Vagina (tissue), 2 donors: ENCODE measurements at regions of chr22 and their contacts with region 1.

Region 1: GRCh38 chr22:33519071-33519973 is 401.0 kb downstream of the LARGE1 start:
- DNase-seq: no peak
- H3K4me3 ChIP-seq: no peak overlapping the region
- H3K27ac ChIP-seq: peak overlapping the region; percentile 47
- H3K4me1 ChIP-seq: peaks cover 11% of the 10 kb centered on the region
- H3K27me3 ChIP-seq: no peaks in the 10 kb centered on the region
- CTCF ChIP-seq: peak; percentile 43 to 69 (median 68)
- POLR2A ChIP-seq: no peak

Region 2: DNA sequence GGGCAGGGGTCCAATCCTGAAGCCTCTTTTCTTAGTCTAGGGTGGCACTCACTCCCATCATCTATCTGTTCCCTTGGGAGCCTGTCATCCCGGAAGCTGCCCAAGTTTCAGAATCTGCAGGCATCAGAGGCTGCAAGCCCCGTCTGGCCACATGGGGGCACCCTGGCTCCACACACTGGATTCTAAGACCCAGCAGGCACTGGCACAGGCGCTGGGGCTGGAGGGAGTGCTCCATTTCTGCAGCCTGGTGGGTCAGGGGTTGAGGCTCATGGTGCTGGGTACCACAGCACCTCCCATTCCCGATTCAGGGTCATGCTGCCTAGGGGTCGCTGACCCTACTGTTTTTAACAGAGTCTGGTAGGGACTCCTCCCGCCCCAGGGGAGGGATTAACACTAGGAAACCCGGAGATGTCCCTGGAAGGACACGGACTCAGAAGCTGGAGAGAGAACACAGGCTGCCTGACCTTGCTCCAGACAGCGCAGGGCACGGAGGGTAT is 217.2 kb before region 1 on chr22:
- intact Hi-C with region 1: loop called (anchors 10 kb)
- DNase-seq: peak in 1 of 2 donors; percentile 89
- H3K4me3 ChIP-seq: peak overlapping the region in 1 of 2 donors; percentile 16
- H3K27ac ChIP-seq: peak overlapping the region; percentile 44
- H3K4me1 ChIP-seq: no peaks in the 10 kb centered on the region
- H3K27me3 ChIP-seq: no peaks in the 10 kb centered on the region
- CTCF ChIP-seq: peak; percentile 87 to 93 (median 87)
- POLR2A ChIP-seq: no peak